Dorsolateral prefrontal cortex (tissue), 120 donors: ENCODE measurements at regions of chr17 and their contacts with region 1.

Region 1: GRCh38 chr17:59331129-59331928 is at the start of gene YPEL2:
- DNase-seq: peak; percentile 95 to 99 (median 98)
- H3K4me3 ChIP-seq: peak within 1 kb of the TSS; percentile 59 to 100 (median 96)
- H3K27ac ChIP-seq: peak within 1 kb of the TSS; percentile 73 to 99 (median 96)
- H3K27me3 ChIP-seq: no peaks in the 10 kb centered on the region
- CTCF ChIP-seq: peak in 11 of 56 donors; percentile 9 to 41 (median 21)
- total RNA-seq, gene YPEL2: 35.6 to 117 (median 58.9) TPM

Region 2: GRCh38 chr17:59220376-59221158 is 110.8 kb before region 1 on chr17 and contains the start of gene GDPD1:
- intact Hi-C with region 1: loop called (anchors 5 to 10 kb)
- DNase-seq: peak; percentile 90 to 97 (median 95)
- H3K4me3 ChIP-seq: peak within 1 kb of the TSS; percentile 62 to 99 (median 92)
- H3K27ac ChIP-seq: peak within 1 kb of the TSS; percentile 71 to 99 (median 92)
- H3K27me3 ChIP-seq: no peaks in the 10 kb centered on the region
- CTCF ChIP-seq: peak; percentile 62 to 95 (median 83)
- total RNA-seq, gene GDPD1: 20.6 to 54.8 (median 38.9) TPM

Region 3: GRCh38 chr17:59254737-59255136 is 76.6 kb before region 1 on chr17:
- intact Hi-C with region 1: no loop called
- DNase-seq: no peak
- H3K4me3 ChIP-seq: no peak overlapping the region
- H3K27ac ChIP-seq: no peak overlapping the region
- H3K27me3 ChIP-seq: no peaks in the 10 kb centered on the region
- CTCF ChIP-seq: no peak

Region 4: DNA sequence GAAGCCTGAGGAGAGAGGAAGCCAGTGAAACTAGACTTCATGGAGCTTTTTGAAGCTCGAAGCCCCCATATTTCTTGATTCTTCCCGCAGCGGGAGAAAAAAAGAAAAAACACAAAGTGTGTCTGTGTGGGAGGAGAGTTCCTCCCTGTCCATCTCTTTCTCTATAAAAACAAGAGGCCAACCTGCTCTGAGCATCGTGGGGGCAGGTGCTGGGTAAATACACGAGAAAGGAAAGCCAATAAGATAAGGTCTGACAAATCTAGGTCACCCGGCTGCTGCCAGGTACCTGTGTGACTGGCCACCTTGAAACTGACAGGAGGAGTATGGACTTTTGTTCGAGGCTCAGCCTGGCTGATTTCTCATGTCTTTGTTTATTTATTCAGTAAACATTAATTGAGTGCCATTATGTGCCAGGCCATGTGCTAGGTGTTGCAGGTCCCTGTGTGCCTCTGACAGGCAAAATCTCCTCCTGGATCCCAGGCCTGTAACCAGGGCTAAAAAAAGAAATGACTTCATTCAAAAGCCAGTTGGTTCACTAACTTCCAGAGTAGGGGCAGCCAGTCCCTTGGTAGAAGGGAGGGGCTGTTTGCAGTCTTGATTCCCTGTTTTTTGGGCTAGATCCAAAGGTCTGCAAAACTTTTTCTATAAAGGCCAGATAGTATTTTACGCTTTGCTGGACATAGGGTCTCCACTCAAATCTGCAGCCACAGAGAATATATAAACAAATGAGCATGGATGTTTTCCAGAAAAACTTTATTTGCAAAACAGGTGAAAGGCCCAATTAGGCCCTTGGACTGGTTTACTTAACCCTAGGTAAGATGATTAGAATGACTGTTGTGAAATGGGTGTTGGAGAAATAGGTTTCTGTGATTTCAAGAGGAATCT is 35.7 kb after region 1 on chr17:
- intact Hi-C with region 1: loop called in 1 of 2 experiments (anchors 5 kb)
- DNase-seq: peak in 1 of 10 donors; percentile 67
- H3K4me3 ChIP-seq: peak overlapping the region in 25 of 59 donors; percentile 1 to 39 (median 25)
- H3K27ac ChIP-seq: peak overlapping the region; percentile 90 to 100 (median 99)
- H3K27me3 ChIP-seq: no peaks in the 10 kb centered on the region
- CTCF ChIP-seq: no peak

Region 5: DNA sequence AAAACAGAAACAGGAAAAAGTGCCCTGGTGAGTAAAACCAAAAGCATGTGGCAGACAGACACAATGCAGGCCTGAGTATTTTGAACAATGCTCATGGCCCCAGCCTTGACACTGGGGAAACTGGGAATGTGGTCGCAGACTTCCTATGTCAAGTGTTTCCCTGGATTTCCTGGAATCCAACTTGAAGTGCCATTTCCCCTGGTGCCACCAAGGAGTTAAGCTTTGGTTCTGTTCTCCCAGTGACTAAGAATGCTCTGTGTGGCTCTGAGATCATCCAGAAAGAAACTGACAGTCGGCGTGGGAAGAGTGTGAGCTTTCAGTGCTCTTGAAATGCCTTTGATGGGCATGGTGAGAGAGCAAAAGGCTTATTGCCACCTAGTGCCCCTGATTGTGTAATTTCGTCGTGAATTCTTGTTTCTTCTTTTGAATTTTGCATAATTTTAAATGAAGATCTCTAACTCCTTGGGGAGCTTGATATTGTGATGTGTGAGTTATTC is 96.1 kb after region 1 on chr17:
- intact Hi-C with region 1: loop called in 1 of 2 experiments (anchors 5 kb)
- DNase-seq: peak in 7 of 10 donors; percentile 55 to 81 (median 65)
- H3K4me3 ChIP-seq: peak overlapping the region in 17 of 59 donors; percentile 1 to 39 (median 10)
- H3K27ac ChIP-seq: peak overlapping the region; percentile 57 to 96 (median 90)
- H3K27me3 ChIP-seq: no peaks in the 10 kb centered on the region
- CTCF ChIP-seq: peak in 42 of 56 donors; percentile 7 to 63 (median 37)

Region 6: DNA sequence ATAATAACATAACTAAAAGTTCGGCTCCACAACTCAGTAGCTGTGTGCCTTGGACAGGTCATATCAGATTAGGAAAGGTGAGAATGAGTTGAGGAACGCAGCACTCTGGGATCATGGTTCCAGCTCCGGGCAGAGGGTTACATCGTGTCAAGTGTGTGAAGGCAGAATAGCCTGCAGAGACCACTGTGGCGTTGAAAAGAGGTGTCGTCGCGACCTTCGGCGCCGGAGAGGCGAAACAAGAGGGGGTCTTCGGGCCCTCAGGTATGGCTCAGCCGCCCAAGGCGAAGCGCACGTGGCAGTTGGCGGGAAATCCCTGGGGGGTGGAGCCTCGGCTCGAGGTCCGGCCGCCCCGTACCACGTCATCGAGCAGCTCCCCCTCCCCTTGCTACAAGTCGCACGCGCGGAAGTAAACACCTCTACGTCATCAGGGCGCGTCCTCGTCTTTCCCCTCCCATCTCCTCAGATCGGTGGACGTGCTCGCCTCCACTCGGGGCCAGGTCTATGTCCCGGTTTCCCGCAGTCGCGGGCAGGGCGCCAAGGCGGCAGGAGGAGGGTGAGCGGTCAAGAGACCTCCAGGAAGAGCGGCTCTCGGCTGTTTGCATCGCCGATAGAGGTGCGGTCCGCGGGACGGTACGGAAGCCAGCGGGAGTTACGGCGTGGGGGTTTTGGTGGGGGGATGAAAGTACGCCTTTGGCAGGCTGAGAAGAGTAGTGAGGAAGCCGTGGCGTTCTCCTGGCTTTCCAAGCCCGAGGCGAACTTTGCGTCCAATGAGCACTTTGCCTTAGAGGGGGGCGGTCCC is 234.0 kb after region 1 on chr17 and contains the start of gene DHX40:
- intact Hi-C with region 1: loop called in 1 of 2 experiments (anchors 5 kb)
- DNase-seq: peak; percentile 87 to 97 (median 93)
- H3K4me3 ChIP-seq: peak within 1 kb of the TSS; percentile 67 to 100 (median 91)
- H3K27ac ChIP-seq: peak within 1 kb of the TSS in 58 of 59 donors; percentile 46 to 91 (median 80)
- H3K27me3 ChIP-seq: no peaks in the 10 kb centered on the region
- CTCF ChIP-seq: peak in 10 of 56 donors; percentile 3 to 22 (median 12)
- total RNA-seq, gene DHX40: 19.1 to 37.5 (median 26.3) TPM